CD4-positive, alpha-beta memory T cell (primary cell): ENCODE measurements at regions of chr16 and their contacts with region 1.

Region 1: GRCh38 chr16:68367030-68367429 is 56.2 kb downstream of the PRMT7 start:
- DNase-seq: peak; percentile 30 to 42 (median 34)
- H3K4me3 ChIP-seq: no peak overlapping the region
- H3K4me3 Mint-ChIP-seq: peak overlapping the region in 3 of 8 donors; percentile 7 to 39 (median 20)
- H3K27ac ChIP-seq: no peak overlapping the region
- H3K27ac Mint-ChIP-seq: peak overlapping the region in 1 of 7 donors; percentile 52
- H3K4me1 ChIP-seq: peaks cover 57% of the 10 kb centered on the region
- H3K4me1 Mint-ChIP-seq: peaks cover 21 to 64% (median 45%) of the 10 kb centered on the region in 4 donors
- H3K27me3 ChIP-seq: no peaks in the 10 kb centered on the region
- H3K27me3 Mint-ChIP-seq: no peaks in the 10 kb centered on the region

Region 2: DNA sequence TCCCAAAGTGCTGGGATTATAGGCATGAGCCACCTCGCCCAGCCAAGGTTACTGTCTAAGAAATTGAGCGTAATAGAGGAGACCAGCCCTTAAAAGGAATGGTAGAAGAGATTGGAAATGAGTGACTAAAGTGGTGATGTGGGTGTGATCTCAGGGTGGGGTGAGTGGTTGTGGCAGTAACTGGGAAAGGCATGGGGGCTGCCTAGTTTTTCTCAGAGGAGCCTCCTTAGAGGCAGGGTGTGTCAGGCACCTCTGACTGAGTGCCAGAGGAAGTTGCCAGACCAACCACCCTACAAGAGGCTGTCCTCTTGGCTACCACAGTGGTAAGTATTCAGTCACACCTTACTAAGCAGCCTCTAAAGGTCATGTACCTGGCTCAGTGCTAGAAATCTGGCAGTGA is 335.1 kb before region 1 on chr16:
- CTCF ChIA-PET with region 1: no interaction called
- POLR2A ChIA-PET with region 1: no interaction called
- intact Hi-C with region 1: no loop called
- DNase-seq: no peak
- H3K4me3 ChIP-seq: no peak overlapping the region
- H3K4me3 Mint-ChIP-seq: no peak overlapping the region
- H3K27ac ChIP-seq: no peak overlapping the region
- H3K27ac Mint-ChIP-seq: peak overlapping the region in 1 of 7 donors; percentile 22
- H3K4me1 ChIP-seq: no peaks in the 10 kb centered on the region
- H3K4me1 Mint-ChIP-seq: peaks cover 2 to 19% (median 5%) of the 10 kb centered on the region in 4 donors
- H3K27me3 ChIP-seq: no peaks in the 10 kb centered on the region
- H3K27me3 Mint-ChIP-seq: no peaks in the 10 kb centered on the region

Region 3: GRCh38 chr16:68356249-68356918 is 10.6 kb before region 1 on chr16:
- CTCF ChIA-PET with region 1: interaction called, 13 read pairs
- POLR2A ChIA-PET with region 1: interaction called, 3 read pairs
- intact Hi-C with region 1: no loop called
- DNase-seq: peak; percentile 73 to 86 (median 80)
- H3K4me3 ChIP-seq: peak overlapping the region; percentile 23 to 29
- H3K4me3 Mint-ChIP-seq: peak overlapping the region; percentile 65 to 89 (median 80)
- H3K27ac ChIP-seq: no peak overlapping the region
- H3K27ac Mint-ChIP-seq: peak overlapping the region in 6 of 7 donors; percentile 47 to 85 (median 80)
- H3K4me1 ChIP-seq: peaks cover 40% of the 10 kb centered on the region
- H3K4me1 Mint-ChIP-seq: peaks cover 21 to 51% (median 36%) of the 10 kb centered on the region in 4 donors
- H3K27me3 ChIP-seq: no peaks in the 10 kb centered on the region
- H3K27me3 Mint-ChIP-seq: no peaks in the 10 kb centered on the region

Region 4: DNA sequence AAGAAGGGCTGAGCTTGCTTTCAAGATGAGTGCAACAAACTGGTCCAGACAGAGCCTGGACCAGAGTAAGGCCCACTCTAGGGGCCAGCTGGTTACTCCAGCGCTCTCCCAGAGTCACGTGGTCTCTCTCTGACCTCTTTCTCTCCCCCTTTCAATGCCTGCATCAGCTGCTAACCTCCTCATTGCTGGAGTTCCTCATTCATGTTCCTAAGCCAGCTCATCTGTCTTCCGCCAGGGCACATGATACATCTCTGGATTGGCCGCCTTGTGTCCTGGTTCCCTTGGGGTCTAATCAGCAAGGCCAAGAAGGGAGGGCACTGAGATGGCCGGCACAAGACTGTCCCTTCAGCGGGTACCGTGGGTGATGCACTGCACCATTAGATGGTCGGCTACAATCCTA is 145.2 kb after region 1 on chr16:
- CTCF ChIA-PET with region 1: interaction called, 14 read pairs
- POLR2A ChIA-PET with region 1: no interaction called
- intact Hi-C with region 1: no loop called
- DNase-seq: no peak
- H3K4me3 ChIP-seq: no peak overlapping the region
- H3K4me3 Mint-ChIP-seq: no peak overlapping the region
- H3K27ac ChIP-seq: no peak overlapping the region
- H3K27ac Mint-ChIP-seq: peak overlapping the region in 3 of 7 donors; percentile 27 to 72 (median 64)
- H3K4me1 ChIP-seq: peaks cover 7% of the 10 kb centered on the region
- H3K4me1 Mint-ChIP-seq: peaks cover 0 to 4% (median 2%) of the 10 kb centered on the region in 4 donors
- H3K27me3 ChIP-seq: no peaks in the 10 kb centered on the region
- H3K27me3 Mint-ChIP-seq: no peaks in the 10 kb centered on the region